Head of caudate nucleus (tissue), 42 donors: ENCODE measurements at regions of chr19 and their contacts with region 1.

Region 1: DNA sequence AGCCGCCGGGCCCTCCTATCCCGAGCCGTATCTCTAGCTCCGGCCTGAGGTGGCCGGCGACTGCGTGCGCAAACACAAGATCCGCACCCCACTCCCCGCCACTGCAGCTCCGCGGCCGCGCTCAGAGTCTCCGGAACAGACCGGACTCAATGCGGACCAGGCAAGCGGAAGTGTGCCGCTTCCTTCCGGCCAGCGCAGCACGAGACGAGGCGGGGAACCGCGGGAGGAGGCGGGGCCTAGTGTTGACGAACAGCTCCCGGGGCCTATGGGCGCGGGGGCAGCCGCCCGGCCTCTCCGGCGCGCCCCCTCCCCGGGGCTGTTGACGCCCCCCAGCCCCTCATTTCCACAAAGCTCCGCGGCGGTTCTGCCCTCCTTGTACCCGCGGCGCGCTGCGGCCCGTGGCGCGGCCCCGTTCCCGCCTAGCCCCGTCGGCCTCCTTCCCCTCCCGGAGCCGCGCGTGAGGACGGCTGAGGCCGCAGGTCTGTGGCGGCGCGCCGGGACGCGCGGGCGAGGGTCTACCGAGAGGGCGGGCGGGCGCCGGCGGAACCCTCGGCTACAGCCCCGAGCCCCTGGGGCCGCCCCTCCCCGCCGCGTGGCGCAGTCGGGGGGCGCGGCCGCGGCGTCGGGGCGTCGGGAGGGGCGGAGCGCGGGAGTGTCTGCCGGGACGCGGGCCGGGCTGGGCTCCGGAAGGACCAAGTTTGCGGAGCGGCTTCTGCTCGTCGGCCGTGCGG is at the start of gene DPY19L3:
- DNase-seq: peak; percentile 91 to 98 (median 96)

Region 2: DNA sequence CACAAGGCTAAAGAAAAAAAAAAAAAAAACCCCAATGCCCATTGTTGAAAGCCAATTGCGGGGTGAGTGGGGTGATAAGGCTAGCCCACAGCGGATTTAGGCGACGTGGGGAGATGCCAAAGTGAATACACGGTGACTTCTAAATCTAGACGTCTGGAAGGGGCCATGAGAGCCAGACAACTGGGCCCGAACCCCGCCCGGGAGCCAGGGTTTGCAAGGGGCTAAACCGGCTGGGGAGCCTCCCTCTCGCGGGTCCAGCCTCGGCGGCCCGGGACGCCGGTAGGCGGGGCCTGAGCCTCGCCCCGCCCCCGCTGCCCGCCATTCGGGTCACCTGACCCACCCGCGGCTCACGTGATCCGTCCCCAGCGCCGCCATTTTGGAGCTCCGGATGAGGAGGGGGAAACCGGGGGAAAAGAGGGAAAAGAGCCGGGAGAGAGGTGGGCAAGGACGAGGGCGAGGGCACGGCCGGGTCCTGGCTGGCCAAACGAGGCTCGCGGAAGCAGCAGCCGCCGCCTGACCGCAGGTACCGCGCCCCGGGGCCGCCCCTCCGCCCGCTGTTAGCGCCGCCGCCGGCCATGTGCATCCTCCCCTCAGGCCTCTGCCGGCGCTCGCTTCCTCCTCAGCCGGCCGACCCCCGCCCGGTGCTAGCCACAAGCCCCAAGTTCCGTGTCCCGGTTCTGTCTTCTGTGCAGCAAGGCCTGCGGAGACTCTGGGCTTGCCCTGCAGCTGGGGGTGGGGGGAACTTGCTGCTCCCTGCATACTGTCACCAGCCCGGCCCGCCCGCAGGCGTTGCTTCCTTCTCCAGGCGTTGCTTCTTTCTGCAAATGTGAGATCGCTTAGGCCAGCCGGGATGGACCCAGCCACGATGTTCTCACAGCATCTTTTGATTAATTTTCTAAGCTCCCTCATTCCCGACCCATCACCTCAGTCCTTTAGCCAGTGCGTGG is 60.1 kb before region 1 on chr19 and contains the start of gene ZNF507:
- intact Hi-C with region 1: loop called (anchors 2 kb)
- DNase-seq: peak; percentile 62 to 93 (median 86)